AG04449 (cell line): ENCODE measurements at regions of chr11 and their contacts with region 1.

Region 1: DNA sequence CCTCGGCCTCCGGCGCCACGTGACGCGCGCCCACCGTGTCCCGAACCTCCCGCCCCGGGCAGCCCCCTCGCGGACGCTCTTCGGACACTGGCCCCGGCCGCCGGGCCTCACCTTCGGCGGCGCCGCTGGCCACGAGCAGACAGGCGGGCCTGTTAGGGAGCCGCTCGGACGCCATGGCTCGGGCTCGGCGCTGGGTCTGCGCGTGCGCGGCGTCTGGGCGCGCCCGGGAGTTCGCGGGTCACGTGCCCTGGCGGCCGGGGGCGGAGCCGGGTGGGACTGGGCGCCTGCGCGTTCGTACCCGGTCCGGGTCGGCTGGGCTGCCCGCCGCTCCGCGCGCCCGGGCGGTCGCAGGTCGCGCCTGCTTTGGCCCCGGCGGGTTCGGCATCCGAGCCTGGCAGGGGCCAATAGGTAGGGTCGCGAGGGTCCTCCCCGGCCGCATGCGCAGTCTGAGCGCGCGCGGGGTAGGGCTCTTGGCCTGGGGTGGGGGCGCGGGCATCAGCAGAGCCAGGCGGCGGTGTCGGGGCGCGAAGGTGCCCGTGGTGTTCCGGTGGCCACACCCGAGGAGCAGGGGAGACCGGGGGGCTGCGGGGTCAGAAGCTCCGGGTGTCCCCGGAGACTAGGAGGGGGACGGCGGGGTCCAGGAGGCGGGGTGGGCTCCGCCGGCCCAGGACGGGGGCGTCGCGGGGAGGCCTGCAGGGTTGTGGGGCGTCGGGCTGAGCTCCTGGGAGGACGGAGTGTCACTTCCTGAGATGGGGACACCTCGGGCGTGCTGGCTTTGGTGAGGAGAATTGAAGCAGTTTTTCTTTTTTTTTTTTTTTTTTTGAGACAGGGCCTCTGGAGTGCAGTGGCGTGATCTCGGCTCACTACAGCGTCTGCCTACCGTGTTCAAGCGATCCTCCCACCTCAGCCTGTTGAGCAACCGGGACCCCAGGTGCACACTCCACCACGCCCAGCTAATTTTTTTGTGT is at the start of gene GATD1:
- DNase-seq: no peak
- H3K4me3 ChIP-seq: peak within 1 kb of the TSS; percentile 73
- CTCF ChIP-seq: no peak

Region 2: DNA sequence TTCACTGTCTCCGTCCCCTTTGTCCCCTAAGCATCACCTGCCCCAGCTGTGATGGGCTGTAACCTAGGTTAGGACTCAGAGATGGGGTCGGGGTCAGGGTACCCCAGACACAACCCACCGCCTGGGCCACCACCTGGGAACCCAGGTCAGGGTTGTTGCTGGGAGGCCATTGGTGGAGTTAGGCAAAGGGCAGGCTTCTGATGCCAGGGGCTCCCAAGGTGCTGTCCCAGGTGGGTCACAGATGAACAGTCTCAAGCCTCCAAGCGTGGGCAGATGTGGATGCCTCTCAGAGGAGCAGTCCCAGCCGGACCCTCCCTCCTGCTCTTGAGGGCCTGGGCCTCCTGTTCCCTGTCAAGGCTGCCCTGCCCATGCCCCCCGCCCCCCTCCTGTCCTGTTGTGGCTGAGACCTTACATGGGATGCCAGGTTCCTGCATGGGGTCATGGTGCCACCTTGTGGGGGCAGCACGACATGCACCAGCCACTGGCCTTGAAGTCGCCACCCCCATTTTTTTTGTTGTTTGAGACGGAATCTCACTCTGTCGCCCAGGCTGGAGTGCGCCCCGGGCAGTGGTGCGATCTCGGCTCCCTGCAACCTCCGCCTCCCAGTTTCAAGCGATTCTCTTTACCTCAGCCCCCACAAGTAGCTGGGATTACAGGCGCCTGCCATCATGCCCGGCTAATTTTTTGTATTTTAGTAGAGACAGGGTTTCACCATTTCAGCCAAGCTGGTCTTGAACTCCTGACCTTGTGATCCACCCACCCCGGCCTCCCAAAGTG is 12.4 kb before region 1 on chr11:
- CTCF ChIA-PET with region 1: interaction called, 25 read pairs
- POLR2A ChIA-PET with region 1: interaction called, 3 read pairs
- DNase-seq: no peak
- H3K4me3 ChIP-seq: no peak overlapping the region
- CTCF ChIP-seq: peak; percentile 68

Region 3: DNA sequence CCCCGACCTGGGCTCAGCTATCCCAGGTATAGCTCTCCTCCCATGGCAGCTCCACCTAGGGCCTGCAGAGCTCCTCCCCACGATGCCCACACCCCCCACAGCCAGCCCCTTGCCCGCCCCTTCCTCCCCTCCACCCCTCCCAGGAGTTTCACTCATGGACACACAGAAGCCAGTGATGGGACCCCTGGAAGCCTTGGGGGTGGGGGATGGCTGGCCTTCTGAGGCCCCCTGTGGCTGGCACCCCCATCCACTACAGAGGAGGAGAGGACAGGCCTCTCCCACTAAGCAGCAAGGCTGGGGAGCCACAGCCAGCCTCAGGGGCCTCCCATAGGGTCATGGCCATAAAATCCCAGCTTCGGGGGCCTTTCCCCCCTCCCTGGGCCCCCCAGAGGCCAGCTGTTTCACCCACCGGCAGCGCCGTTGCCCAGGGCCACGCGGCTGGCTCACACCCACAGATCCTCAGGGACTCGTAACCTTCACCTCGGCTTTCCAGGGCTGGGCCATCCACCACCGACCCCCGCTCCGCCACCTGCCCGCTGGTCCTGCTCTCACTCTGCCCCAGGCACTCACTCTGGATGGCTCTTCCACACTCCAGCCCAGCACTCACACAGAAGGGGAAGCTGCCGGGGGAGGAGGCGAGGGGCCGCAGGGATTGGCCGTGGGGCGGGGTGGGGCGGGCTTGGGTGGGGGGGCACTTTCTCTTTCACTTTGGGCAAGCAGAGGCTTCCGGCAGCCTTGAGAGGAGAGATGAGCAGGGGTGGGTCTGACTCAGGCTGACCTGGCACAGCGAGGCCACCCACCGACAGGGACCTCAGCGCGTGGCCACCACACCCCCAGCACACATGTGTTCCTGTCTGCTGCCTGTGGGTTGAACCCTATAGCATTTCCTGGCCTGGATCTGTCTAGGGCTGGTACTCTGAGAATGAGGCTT is 18.3 kb after region 1 on chr11:
- CTCF ChIA-PET with region 1: interaction called, 6 read pairs
- POLR2A ChIA-PET with region 1: interaction called, 10 read pairs
- DNase-seq: no peak
- H3K4me3 ChIP-seq: peak overlapping the region; percentile 81
- CTCF ChIP-seq: no peak

Region 4: DNA sequence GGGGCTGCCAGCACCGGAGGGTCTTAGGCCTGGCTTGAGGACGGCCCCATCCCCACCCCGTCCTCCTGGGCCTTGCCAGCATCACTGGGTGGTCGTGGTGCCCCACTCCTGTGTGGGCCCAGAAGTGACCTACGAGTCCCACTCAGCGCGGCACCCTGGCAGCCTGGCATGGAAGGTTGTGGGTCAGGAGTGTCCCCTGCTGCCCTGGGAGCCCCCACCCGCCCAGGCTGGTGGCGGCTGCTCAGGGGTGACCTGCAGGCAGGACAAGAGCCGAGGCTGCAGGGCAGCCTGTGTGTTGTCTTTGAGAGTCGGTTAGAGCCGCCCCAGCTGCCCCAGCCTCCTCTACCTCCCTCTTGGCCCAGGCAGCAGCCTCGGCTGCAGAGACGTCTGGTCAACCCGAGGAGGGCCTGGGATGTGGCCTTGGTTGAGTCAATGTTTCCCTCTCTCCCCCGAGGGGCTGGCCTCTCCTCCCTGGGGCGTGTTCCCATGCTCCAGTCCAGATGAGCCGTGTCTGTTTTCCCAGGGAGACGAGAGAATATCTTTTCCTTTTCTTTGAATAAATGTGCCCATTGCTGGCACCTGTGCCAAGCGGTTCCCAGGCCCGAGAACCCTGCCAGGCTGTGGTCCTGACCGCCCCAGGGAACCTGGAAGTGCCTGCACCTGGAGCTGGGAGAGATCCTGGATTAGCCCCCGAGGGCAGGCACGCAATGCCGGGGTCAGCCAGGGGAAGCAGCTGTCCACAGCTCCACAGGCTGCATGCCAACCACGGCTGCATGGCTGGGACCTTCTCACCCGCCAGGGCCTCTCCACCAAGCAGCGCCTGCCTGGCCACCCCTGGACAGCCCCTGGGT is 344.5 kb after region 1 on chr11:
- CTCF ChIA-PET with region 1: no interaction called
- POLR2A ChIA-PET with region 1: no interaction called
- DNase-seq: no peak
- H3K4me3 ChIP-seq: no peak overlapping the region
- CTCF ChIP-seq: no peak